Natural killer cell (primary cell): ENCODE measurements at regions of chr6 and their contacts with region 1.

Region 1: GRCh38 chr6:106097411-106098231 is 11.5 kb downstream of the PRDM1 start:
- DNase-seq: peak; percentile 48 to 91
- ATAC-seq: peak; percentile 46 to 73 (median 70)
- H3K4me3 ChIP-seq: peak overlapping the region; percentile 80
- H3K4me3 Mint-ChIP-seq: peak overlapping the region; percentile 98
- H3K27ac ChIP-seq: peak overlapping the region; percentile 85
- H3K27ac Mint-ChIP-seq: peak overlapping the region; percentile 98 to 99
- H3K4me1 ChIP-seq: peaks cover 12% of the 10 kb centered on the region
- H3K4me1 Mint-ChIP-seq: peaks cover 82 to 89% of the 10 kb centered on the region in 2 donors
- H3K27me3 ChIP-seq: no peaks in the 10 kb centered on the region
- H3K27me3 Mint-ChIP-seq: no peaks in the 10 kb centered on the region
- CTCF ChIP-seq: no peak

Region 2: DNA sequence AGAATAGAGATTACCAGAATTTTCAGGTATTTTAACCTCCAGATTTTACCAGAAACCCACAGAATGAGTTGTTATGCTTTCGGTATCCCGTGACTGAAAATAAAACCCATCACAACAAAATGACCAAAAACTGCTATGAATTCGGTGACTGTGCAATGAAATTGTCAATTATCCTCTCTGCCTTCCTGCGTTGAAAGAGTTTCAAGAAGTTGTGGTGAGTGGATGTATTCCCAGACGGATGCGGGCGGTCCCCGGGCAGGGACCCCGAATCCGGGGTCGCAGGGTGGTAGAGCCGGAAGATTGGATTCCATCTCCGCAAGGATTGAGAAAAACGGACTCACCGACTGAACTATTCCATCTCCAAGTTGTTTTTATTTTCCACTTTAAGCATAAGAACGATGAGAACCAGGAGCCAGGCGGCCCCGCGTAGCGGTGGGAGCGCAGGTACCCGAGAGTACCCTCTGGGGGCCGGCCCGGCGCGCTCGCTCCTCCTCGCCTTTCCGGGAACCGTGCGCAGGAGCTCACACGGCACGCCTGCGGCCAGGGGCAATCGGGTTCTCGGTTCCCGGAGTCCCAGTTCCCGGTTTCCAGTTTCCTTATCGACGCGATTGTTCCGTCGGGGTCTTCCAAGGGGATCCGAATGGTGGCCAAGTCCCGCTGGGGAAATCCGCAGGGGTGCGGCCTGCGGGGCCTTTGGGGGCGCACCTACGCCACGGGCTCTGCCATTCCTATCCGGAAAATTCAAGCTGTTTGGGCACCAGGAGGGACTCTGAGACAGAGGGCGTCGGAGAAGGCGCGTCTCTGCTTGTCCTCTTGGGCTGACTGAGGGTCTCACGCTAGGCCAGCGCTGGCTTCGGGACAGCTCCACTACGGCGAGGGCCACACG is 116.4 kb before region 1 on chr6:
- intact Hi-C with region 1: no loop called
- DNase-seq: peak in 1 of 2 donors; percentile 57
- ATAC-seq: peak; percentile 56 to 75 (median 64)
- H3K4me3 ChIP-seq: peak overlapping the region; percentile 22
- H3K4me3 Mint-ChIP-seq: peak overlapping the region; percentile 87
- H3K27ac ChIP-seq: no peak overlapping the region
- H3K27ac Mint-ChIP-seq: no peak overlapping the region
- H3K4me1 ChIP-seq: peaks cover 19% of the 10 kb centered on the region
- H3K4me1 Mint-ChIP-seq: peaks cover 12 to 16% of the 10 kb centered on the region in 2 donors
- H3K27me3 ChIP-seq: peaks cover 27% of the 10 kb centered on the region
- H3K27me3 Mint-ChIP-seq: peaks cover 57 to 85% of the 10 kb centered on the region in 2 donors
- CTCF ChIP-seq: no peak

Region 3: DNA sequence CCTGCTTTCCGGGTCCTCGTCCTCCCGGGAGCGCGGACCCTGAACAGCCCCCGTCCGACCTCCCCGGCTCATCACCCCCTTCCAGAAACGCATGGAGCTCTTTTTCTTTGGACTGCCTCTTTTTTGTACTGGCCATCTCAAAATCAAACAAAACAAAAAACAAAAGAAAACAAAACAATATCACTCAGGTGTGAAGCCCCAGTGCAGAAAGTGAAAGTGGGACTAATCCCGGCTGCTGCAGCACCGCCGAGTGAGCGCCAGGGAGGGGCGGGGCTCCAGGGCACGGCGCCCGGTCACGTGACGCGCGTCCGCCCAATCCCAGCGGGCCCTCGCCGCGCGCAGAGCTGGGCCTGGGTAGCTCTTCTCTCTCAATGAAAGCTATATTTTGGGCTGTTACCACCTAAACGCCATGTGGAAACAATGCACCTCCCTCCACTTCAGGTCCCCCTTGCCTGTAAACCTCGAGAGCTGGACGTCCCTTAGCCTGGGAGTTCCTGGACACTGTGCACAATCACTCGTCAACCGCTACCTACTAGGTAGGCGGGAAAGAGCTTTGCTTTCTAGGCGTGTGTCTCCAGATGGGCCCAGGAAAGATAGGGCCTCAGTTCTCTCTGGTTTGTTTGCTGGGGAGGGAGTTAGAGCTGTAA is 105.2 kb before region 1 on chr6:
- intact Hi-C with region 1: loop called (anchors 2 kb)
- DNase-seq: peak; percentile 83 to 95
- ATAC-seq: peak; percentile 83 to 91 (median 90)
- H3K4me3 ChIP-seq: peak overlapping the region; percentile 88
- H3K4me3 Mint-ChIP-seq: peak overlapping the region; percentile 99
- H3K27ac ChIP-seq: peak overlapping the region; percentile 67
- H3K27ac Mint-ChIP-seq: peak overlapping the region; percentile 86 to 89
- H3K4me1 ChIP-seq: peaks cover 35% of the 10 kb centered on the region
- H3K4me1 Mint-ChIP-seq: peaks cover 33% of the 10 kb centered on the region in 2 donors
- H3K27me3 ChIP-seq: peaks cover 40% of the 10 kb centered on the region
- H3K27me3 Mint-ChIP-seq: peaks cover 53 to 66% of the 10 kb centered on the region in 2 donors
- CTCF ChIP-seq: no peak

Region 4: DNA sequence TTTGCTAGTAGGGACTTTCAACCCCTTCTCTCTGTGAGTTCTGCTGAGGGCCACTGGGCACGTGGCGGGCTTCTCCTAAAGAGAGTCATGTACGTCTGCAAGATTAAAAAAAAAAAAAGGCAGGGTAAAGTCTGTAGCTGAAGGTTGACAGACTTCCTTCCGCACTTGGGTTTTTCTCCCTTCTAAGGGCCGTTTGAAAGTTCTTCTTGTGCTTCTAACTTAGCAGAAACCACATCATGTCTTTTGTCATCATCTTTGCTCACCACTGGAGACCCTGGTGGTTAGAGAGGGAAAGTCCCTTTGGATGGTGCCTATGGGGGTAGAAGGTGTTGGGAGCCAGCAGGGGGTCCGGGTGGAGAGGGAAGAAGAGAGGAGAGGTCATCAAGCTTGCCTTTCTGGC is 20.0 kb after region 1 on chr6:
- intact Hi-C with region 1: loop called (anchors 2 kb)
- DNase-seq: peak in 1 of 2 donors; percentile 90
- ATAC-seq: peak; percentile 86 to 92 (median 90)
- H3K4me3 ChIP-seq: no peak overlapping the region
- H3K4me3 Mint-ChIP-seq: peak overlapping the region; percentile 65
- H3K27ac ChIP-seq: peak overlapping the region; percentile 69
- H3K27ac Mint-ChIP-seq: peak overlapping the region; percentile 95
- H3K4me1 ChIP-seq: peaks cover 59% of the 10 kb centered on the region
- H3K4me1 Mint-ChIP-seq: peaks cover 59 to 66% of the 10 kb centered on the region in 2 donors
- H3K27me3 ChIP-seq: no peaks in the 10 kb centered on the region
- H3K27me3 Mint-ChIP-seq: no peaks in the 10 kb centered on the region
- CTCF ChIP-seq: no peak

Region 5: GRCh38 chr6:106163446-106163965 is 65.9 kb after region 1 on chr6:
- intact Hi-C with region 1: loop called (anchors 1 kb)
- DNase-seq: peak; percentile 48 to 72
- ATAC-seq: peak; percentile 45 to 63 (median 55)
- H3K4me3 ChIP-seq: no peak overlapping the region
- H3K4me3 Mint-ChIP-seq: peak overlapping the region; percentile 77
- H3K27ac ChIP-seq: peak overlapping the region; percentile 90
- H3K27ac Mint-ChIP-seq: peak overlapping the region; percentile 94 to 98
- H3K4me1 ChIP-seq: peaks cover 34% of the 10 kb centered on the region
- H3K4me1 Mint-ChIP-seq: peaks cover 63 to 65% of the 10 kb centered on the region in 2 donors
- H3K27me3 ChIP-seq: no peaks in the 10 kb centered on the region
- H3K27me3 Mint-ChIP-seq: no peaks in the 10 kb centered on the region
- CTCF ChIP-seq: no peak

Region 6: DNA sequence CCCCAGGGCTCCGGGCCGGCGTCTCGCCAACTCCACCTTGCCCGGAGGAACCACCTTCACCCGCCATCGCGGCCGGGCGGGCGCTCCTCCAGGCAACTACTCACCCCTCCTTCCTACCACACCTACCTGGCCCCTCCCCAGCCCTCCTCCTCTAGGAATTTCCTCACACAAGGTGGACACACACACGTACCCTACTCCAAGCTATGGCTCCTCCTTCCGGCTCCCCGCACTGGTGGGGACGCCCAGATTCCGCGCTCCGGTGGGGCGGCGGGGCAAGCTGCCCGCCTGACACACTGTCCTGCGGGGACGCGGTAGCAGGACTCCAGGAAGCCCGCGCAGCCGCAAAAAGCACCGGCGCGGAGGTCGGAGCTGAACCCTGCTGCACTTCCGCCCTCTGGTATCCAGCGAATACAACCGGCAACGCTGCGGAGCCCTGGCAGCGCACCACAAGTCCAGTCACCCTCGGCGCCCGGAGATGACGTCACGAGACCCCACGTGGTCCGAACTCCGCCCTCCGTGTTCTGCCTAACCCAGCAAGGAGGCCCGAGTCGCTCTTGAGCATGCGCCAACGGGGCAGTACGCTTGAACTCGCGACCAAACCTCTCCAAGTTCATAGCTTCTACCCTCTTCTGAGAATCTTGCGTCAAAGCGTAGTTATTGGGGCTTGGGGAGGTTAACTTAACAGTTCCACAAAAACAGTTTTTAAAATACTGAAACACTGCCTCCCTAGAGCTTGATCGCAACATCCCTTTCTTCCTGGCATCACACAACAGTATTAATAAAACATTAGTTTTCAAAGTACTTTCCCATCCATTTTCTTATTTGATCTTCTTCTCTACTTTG is 227.9 kb after region 1 on chr6 and contains the start of gene ATG5:
- intact Hi-C with region 1: loop called (anchors 5 kb)
- DNase-seq: peak; percentile 100
- ATAC-seq: peak; percentile 93 to 98 (median 95)
- H3K4me3 ChIP-seq: peak within 1 kb of the TSS; percentile 95
- H3K4me3 Mint-ChIP-seq: peak within 1 kb of the TSS; percentile 99
- H3K27ac ChIP-seq: peak within 1 kb of the TSS; percentile 90
- H3K27ac Mint-ChIP-seq: peak within 1 kb of the TSS; percentile 94 to 100
- H3K4me1 ChIP-seq: peaks cover 18% of the 10 kb centered on the region
- H3K4me1 Mint-ChIP-seq: peaks cover 46 to 53% of the 10 kb centered on the region in 2 donors
- H3K27me3 ChIP-seq: peaks cover 3% of the 10 kb centered on the region
- H3K27me3 Mint-ChIP-seq: peaks cover 20 to 22% of the 10 kb centered on the region in 2 donors
- CTCF ChIP-seq: no peak
- total RNA-seq, gene ATG5: 27.5 to 39.0 (median 35.4) TPM

Region 7: GRCh38 chr6:107820338-107821261 is 1723.0 kb after region 1 on chr6:
- intact Hi-C with region 1: loop called (anchors 5 kb)
- DNase-seq: peak in 1 of 2 donors; percentile 70
- ATAC-seq: peak in 1 of 3 donors; percentile 10
- H3K4me3 ChIP-seq: peak overlapping the region; percentile 16
- H3K4me3 Mint-ChIP-seq: peak overlapping the region; percentile 98
- H3K27ac ChIP-seq: peak overlapping the region; percentile 96
- H3K27ac Mint-ChIP-seq: peak overlapping the region; percentile 89 to 100
- H3K4me1 ChIP-seq: peaks cover 50% of the 10 kb centered on the region
- H3K4me1 Mint-ChIP-seq: peaks cover 76 to 82% of the 10 kb centered on the region in 2 donors
- H3K27me3 ChIP-seq: no peaks in the 10 kb centered on the region
- H3K27me3 Mint-ChIP-seq: no peaks in the 10 kb centered on the region
- CTCF ChIP-seq: no peak